Activated CD4-positive, alpha-beta memory T cell treated with anti-CD3 and anti-CD28 coated beads for 36 hours (primary cell): ENCODE measurements at regions of chr14 and their contacts with region 1.

Region 1: DNA sequence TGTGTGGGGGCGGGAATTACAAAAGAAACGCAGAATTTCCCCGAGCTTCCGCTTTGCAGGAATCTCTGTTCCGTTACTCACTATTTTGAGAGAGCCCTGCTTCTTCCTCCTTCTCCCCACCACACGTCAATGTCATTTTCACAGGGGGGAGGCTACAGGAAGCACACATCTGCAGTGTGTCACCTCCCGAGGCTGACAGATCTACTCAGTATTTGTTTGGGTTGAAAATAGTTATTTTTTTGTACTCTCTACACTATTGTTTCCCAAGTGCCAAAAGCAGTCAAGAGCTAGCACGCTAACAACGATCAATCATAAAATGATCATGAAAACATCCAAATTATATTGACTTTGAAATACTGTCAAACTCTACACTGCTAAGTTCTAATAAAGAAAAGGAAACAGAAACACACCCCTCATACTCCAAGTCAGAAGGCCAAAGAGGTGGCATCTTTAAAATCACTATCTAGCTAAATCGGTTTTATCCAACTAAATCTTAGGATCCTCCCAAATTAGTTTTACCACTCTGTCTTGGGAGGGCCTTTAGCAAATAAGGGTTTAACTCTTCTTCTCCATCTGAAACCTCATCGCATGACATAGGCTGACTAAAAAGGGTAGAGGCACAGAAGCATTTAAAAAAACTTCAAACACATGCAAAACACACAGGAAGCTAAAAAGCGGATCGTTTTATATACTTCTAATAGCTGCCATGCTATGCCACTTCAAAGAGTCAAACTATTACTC is 51.8 kb downstream of the FOXN3 start:
- DNase-seq: peak; percentile 73
- H3K4me3 Mint-ChIP-seq: peak overlapping the region; percentile 73
- H3K27ac Mint-ChIP-seq: peak overlapping the region; percentile 93
- H3K4me1 Mint-ChIP-seq: peaks cover 53% of the 10 kb centered on the region
- H3K27me3 Mint-ChIP-seq: no peaks in the 10 kb centered on the region

Region 2: GRCh38 chr14:89276424-89276975 is 88.7 kb before region 1 on chr14:
- CTCF ChIA-PET with region 1: no interaction called
- POLR2A ChIA-PET with region 1: interaction called, 3 read pairs
- intact Hi-C with region 1: loop called (anchors 10 kb)
- DNase-seq: peak; percentile 92
- H3K4me3 Mint-ChIP-seq: peak overlapping the region; percentile 60
- H3K27ac Mint-ChIP-seq: peak overlapping the region; percentile 94
- H3K4me1 Mint-ChIP-seq: peaks cover 77% of the 10 kb centered on the region
- H3K27me3 Mint-ChIP-seq: no peaks in the 10 kb centered on the region

Region 3: GRCh38 chr14:89340200-89341181 is 24.7 kb before region 1 on chr14:
- CTCF ChIA-PET with region 1: interaction called, 4 read pairs
- POLR2A ChIA-PET with region 1: no interaction called
- intact Hi-C with region 1: loop called (anchors 1 kb)
- DNase-seq: no peak
- H3K4me3 Mint-ChIP-seq: no peak overlapping the region
- H3K27ac Mint-ChIP-seq: no peak overlapping the region
- H3K4me1 Mint-ChIP-seq: peaks cover 44% of the 10 kb centered on the region
- H3K27me3 Mint-ChIP-seq: no peaks in the 10 kb centered on the region

Region 4: GRCh38 chr14:89613260-89614008 is 248.2 kb after region 1 on chr14:
- CTCF ChIA-PET with region 1: no interaction called
- POLR2A ChIA-PET with region 1: no interaction called
- intact Hi-C with region 1: loop called (anchors 5 kb)
- DNase-seq: peak; percentile 69
- H3K4me3 Mint-ChIP-seq: peak overlapping the region; percentile 56
- H3K27ac Mint-ChIP-seq: peak overlapping the region; percentile 86
- H3K4me1 Mint-ChIP-seq: peaks cover 75% of the 10 kb centered on the region
- H3K27me3 Mint-ChIP-seq: no peaks in the 10 kb centered on the region